Endothelial cell of umbilical vein (primary cell): ENCODE measurements at regions of chr11 and their contacts with region 1.

Region 1: DNA sequence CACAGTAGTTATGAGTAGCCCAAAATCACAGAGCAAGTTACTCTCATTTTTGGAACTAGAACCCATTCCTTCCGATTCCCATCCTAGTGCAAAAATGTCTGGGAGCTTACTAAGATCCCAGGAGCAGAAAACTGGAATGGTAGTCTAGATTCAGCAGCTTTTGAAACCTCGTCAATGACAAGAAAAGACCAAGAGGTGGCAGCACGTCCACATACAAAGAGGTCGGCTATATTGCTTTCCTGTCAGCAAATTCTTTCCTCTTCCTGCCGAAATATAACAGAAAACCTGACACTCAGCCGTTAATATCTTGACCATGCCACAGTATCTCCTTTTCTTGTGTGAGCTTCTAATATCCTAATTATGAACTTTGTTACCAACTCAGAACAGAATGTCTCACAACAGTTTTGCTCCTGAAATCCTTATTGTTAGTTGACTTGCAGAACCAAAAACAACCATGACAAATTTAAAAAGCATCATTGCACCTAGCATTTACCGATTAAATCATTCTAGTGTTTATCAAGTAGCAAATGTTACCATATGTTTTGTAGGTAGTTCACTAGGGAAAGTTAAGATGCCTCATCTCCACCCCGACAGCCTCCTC is 92.8 kb upstream of the OR9G4 start:
- DNase-seq: peak; percentile 64
- H3K4me3 ChIP-seq: no peak overlapping the region
- H3K27ac ChIP-seq: no peak overlapping the region
- H3K4me1 ChIP-seq: no peaks in the 10 kb centered on the region
- H3K27me3 ChIP-seq: no peaks in the 10 kb centered on the region
- CTCF ChIP-seq: peak; percentile 44 to 64
- POLR2A ChIP-seq: no peak

Region 2: DNA sequence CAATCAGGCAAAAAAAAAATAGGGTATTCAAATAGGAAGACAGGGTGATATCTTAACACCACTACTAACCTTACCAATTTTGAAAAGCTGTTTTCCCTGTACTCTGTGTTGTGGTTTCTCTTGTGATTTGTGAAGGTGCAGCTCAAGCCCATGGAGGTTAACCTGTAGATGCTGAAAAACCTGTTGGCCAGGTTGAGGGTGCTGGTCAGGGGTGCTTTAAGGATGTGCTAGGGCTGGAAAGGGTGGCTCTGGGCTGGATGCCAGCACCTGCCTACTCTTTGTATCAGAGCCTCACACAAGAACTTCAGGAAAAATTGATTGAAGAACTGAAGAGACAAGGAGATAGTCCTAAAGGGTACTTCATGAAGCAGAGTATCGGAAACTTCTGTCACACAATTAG is 331.9 kb before region 1 on chr11:
- CTCF ChIA-PET with region 1: no interaction called
- POLR2A ChIA-PET with region 1: no interaction called
- dilution Hi-C with region 1: no loop called
- intact Hi-C with region 1: no loop called
- DNase-seq: no peak
- H3K4me3 ChIP-seq: no peak overlapping the region
- H3K27ac ChIP-seq: no peak overlapping the region
- H3K4me1 ChIP-seq: no peaks in the 10 kb centered on the region
- H3K27me3 ChIP-seq: no peaks in the 10 kb centered on the region
- CTCF ChIP-seq: no peak
- POLR2A ChIP-seq: no peak

Region 3: GRCh38 chr11:56910785-56911184 is 69.5 kb after region 1 on chr11:
- CTCF ChIA-PET with region 1: no interaction called
- POLR2A ChIA-PET with region 1: no interaction called
- dilution Hi-C with region 1: no loop called
- intact Hi-C with region 1: no loop called
- DNase-seq: no peak
- H3K4me3 ChIP-seq: no peak overlapping the region
- H3K27ac ChIP-seq: no peak overlapping the region
- H3K4me1 ChIP-seq: no peaks in the 10 kb centered on the region
- H3K27me3 ChIP-seq: no peaks in the 10 kb centered on the region
- CTCF ChIP-seq: no peak
- POLR2A ChIP-seq: no peak

Region 4: GRCh38 chr11:57001674-57002401 is 160.5 kb after region 1 on chr11:
- CTCF ChIA-PET with region 1: no interaction called
- POLR2A ChIA-PET with region 1: no interaction called
- dilution Hi-C with region 1: no loop called
- intact Hi-C with region 1: loop called (anchors 10 kb)
- DNase-seq: peak; percentile 2
- H3K4me3 ChIP-seq: no peak overlapping the region
- H3K27ac ChIP-seq: no peak overlapping the region
- H3K4me1 ChIP-seq: no peaks in the 10 kb centered on the region
- H3K27me3 ChIP-seq: no peaks in the 10 kb centered on the region
- CTCF ChIP-seq: peak; percentile 17 to 45
- POLR2A ChIP-seq: no peak

Region 5: DNA sequence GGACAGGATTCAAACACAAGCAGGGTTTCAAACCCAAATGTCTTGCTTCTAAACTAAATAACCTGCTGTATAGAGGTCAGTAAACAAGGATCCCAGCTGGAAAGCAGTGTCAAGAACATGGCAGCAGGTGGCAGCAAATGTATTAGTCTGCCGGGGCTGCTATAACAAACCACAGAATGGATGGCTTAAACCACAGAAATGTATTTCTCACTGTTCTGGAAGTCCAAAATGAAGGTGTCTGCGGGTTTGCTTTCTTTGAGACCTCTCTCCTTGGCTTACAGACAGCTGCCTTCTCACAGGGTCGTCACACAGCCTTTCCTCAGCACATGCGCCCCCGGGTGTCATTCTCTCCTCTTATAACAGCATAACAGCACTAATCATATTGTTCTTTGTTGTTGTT is 275.3 kb after region 1 on chr11:
- CTCF ChIA-PET with region 1: interaction called, 4 read pairs
- POLR2A ChIA-PET with region 1: no interaction called
- dilution Hi-C with region 1: no loop called
- intact Hi-C with region 1: loop called (anchors 1 kb)
- DNase-seq: peak; percentile 57
- H3K4me3 ChIP-seq: no peak overlapping the region
- H3K27ac ChIP-seq: no peak overlapping the region
- H3K4me1 ChIP-seq: no peaks in the 10 kb centered on the region
- H3K27me3 ChIP-seq: peaks cover 0 to 1% of the 10 kb centered on the region in 2 experiments
- CTCF ChIP-seq: peak; percentile 44 to 62
- POLR2A ChIP-seq: no peak

Region 6: GRCh38 chr11:57131080-57131790 is 289.9 kb after region 1 on chr11:
- CTCF ChIA-PET with region 1: no interaction called
- POLR2A ChIA-PET with region 1: no interaction called
- dilution Hi-C with region 1: no loop called
- intact Hi-C with region 1: loop called (anchors 5 kb)
- DNase-seq: peak; percentile 47
- H3K4me3 ChIP-seq: no peak overlapping the region
- H3K27ac ChIP-seq: no peak overlapping the region
- H3K4me1 ChIP-seq: peaks cover 4% of the 10 kb centered on the region
- H3K27me3 ChIP-seq: peaks cover 0 to 2% of the 10 kb centered on the region in 2 experiments
- CTCF ChIP-seq: peak; percentile 43 to 70
- POLR2A ChIP-seq: no peak

Region 7: DNA sequence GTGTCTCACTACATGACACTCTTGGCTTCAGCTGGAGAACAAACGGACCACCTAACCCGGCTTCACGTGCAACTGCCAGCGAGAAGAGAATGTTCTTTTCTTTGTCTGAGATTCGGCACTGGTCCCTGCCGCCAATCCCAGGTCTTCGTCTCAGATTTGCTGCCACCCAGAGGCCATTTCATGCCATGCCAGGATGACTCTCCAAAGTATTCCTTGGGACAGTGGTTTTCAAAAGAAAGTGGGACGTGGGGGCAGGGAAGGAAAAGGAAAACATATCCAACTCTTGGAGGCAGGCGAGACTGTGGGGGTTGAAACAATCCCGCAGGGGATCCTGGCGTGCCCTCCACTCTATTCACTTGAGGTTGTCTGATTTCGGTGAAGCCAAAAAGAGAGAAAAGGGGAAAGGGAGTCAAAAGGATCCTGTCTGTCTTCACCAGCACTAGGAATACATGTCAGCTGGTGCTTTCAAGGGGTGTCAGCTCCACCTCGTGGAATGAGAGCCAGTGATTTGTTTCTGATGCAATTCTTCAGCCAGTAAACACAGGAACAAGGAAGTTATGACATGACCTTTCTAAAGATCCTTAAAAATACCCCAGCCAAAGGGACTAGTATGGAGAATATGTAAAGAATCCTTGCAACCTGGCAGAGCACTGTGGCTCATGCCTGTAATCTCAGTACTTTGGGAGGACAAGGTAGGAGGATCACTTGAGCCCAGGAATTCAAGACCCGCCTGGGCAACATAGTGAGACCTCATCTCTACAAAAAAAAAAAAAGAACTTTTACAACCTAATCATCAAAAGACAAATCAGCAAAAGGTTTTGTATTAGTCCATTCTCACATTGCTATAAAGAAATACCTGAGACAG is 436.8 kb after region 1 on chr11:
- CTCF ChIA-PET with region 1: interaction called, 8 read pairs
- POLR2A ChIA-PET with region 1: no interaction called
- dilution Hi-C with region 1: no loop called
- intact Hi-C with region 1: loop called (anchors 1 kb)
- DNase-seq: peak; percentile 92
- H3K4me3 ChIP-seq: peak overlapping the region in 1 of 3 experiments; percentile 25
- H3K27ac ChIP-seq: peak overlapping the region; percentile 65
- H3K4me1 ChIP-seq: peaks cover 32% of the 10 kb centered on the region
- H3K27me3 ChIP-seq: no peaks in the 10 kb centered on the region
- CTCF ChIP-seq: peak; percentile 83 to 96
- POLR2A ChIP-seq: no peak

Region 8: DNA sequence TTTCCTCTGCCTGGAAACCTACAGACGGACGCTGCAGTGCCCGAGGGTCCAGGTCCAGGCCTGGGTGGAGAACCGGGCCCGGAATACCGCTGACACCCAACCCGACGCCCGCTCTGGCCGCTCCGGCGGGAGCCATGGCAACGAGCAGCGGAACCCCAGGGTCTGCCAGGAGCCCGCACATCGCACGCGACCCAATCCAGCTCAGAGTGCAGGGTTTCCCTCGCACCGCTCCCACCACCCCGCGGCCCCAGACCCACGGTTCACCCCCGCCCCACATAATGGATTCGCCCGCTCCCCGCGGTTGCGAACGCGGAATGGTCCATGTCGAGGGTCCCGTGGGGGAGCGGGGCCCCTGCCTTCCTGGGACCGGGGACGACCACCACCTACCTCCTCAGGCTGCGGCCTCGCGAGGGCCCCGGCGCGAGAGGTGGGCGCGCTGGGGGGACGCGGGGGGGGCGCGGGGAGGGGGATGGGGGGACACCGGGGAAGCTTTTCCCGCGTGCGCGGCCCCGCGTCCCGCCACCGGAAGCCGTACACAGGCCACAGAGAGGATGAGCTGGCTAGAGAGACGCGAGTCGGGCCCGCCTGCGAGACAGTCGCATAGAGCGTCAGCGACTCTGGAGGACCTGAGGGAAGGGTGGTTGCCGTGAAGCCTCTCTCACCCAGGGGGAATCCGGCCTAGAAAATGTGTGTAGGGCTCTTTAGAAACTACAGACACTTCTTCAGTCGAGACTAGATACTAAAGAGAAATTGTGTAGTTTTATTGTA is 494.2 kb after region 1 on chr11 and contains the start of gene SSRP1:
- CTCF ChIA-PET with region 1: interaction called, 5 read pairs
- POLR2A ChIA-PET with region 1: no interaction called
- dilution Hi-C with region 1: no loop called
- intact Hi-C with region 1: loop called (anchors 2 kb)
- DNase-seq: peak; percentile 77
- H3K4me3 ChIP-seq: peak within 1 kb of the TSS; percentile 58 to 82 (median 61)
- H3K27ac ChIP-seq: peak within 1 kb of the TSS; percentile 54
- H3K4me1 ChIP-seq: peaks cover 17% of the 10 kb centered on the region
- H3K27me3 ChIP-seq: peaks cover 4 to 9% of the 10 kb centered on the region in 2 experiments
- CTCF ChIP-seq: no peak
- POLR2A ChIP-seq: peak; percentile 82
- total RNA-seq, gene SSRP1: 140 and 146 TPM in 2 replicates